HEK293 (cell line): ENCODE measurements at regions of chr22 and their contacts with region 1.

Region 1: DNA sequence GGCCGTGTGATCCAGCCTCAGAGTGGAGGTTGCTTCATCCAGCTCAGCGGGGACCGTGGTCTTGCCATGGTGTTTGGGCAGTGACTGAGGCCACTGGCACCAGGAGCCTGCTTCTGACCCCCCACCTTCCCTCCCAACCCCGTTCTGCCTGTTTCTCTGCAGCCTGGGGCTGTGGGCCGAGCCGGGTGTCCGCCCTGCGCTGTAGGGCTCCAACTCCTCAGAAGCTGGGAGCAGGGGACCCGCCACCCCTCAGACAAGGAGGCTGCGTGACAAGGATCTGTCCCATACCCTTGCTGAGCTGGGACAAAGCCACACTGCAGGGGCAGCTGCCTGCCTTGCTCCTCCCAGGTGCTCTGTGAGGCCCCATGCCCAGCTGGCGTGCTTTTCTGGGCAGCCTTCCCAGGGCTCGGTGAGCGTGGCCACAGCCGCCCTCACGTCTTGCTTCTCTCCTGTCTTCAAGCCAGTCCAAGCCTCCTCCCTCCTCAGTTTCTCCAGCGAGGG is 11.7 kb upstream of the ARFGAP3 start:
- H3K4me3 ChIP-seq: no peak overlapping the region
- H3K27ac ChIP-seq: no peak overlapping the region
- H3K4me1 ChIP-seq: no peaks in the 10 kb centered on the region
- CTCF ChIP-seq: no peak

Region 2: GRCh38 chr22:42116848-42117424 is 751.9 kb before region 1 on chr22:
- CTCF ChIA-PET with region 1: no interaction called
- POLR2A ChIA-PET with region 1: no interaction called
- H3K4me3 ChIP-seq: no peak overlapping the region
- H3K27ac ChIP-seq: no peak overlapping the region
- H3K4me1 ChIP-seq: no peaks in the 10 kb centered on the region
- CTCF ChIP-seq: no peak

Region 3: DNA sequence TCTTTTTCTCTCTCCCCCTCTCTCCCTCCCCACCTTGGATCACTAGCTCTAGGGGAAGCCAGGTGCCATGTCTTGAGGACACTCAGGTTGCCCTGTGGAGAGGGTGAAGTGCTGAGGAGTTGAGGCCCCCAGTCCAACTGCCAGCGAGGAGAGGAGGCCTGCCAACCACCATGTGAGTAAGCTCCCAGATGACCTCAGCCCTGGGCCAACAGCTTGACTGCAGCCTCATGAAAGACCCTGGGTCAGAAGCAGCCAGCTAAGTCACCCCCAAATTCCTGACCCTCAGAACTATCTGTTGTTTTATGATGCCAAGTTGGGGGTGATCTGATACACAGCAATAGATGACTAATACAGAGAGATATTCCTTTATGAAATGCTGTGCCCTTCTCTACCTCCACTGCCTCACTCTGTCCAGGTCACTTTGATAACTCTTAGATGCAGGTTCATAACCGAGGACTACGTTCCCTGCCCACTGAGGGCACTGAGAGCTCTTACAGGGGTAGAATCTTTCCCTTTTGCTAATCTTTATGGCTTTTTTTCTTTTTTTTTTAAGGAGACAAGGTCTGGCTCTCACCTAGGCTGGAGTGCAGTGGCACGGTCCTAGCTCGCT is 19.8 kb before region 1 on chr22:
- CTCF ChIA-PET with region 1: interaction called, 23 read pairs
- POLR2A ChIA-PET with region 1: no interaction called
- H3K4me3 ChIP-seq: no peak overlapping the region
- H3K27ac ChIP-seq: no peak overlapping the region
- H3K4me1 ChIP-seq: no peaks in the 10 kb centered on the region
- CTCF ChIP-seq: no peak

Region 4: DNA sequence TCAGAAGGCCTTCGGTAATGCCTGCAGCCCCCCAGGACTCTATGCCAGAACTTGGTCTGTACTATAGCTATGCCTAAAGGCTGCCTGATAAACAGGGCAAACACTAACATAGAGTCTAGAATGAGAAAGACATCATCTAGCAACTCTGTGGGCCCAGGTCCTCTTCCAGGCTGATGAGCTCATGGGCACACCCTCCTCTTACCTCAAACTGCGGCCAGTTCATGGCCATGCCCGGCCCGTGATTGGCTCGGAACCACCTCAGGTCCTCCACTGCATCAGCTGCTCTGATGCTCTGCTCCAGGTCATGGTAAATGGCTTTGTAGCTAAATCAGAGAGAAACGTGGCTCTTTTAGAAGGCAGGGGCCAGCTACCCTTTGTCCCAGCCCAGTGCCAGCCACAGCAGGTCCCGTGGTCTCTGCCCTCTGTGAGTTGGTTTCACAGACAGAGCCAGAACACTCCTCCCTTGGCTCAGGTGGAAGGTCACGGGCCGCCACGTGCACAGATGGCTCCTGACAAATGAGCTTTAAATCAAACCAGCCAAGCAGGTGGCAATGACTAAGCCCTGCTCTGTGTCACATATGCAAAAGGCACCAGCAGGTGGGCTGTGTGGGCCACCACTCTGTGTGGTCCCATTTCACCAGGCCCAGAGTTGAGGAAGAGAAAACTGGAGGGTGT is 13.3 kb after region 1 on chr22:
- CTCF ChIA-PET with region 1: interaction called, 25 read pairs
- POLR2A ChIA-PET with region 1: no interaction called
- H3K4me3 ChIP-seq: no peak overlapping the region
- H3K27ac ChIP-seq: no peak overlapping the region
- H3K4me1 ChIP-seq: no peaks in the 10 kb centered on the region
- CTCF ChIP-seq: no peak

Region 5: DNA sequence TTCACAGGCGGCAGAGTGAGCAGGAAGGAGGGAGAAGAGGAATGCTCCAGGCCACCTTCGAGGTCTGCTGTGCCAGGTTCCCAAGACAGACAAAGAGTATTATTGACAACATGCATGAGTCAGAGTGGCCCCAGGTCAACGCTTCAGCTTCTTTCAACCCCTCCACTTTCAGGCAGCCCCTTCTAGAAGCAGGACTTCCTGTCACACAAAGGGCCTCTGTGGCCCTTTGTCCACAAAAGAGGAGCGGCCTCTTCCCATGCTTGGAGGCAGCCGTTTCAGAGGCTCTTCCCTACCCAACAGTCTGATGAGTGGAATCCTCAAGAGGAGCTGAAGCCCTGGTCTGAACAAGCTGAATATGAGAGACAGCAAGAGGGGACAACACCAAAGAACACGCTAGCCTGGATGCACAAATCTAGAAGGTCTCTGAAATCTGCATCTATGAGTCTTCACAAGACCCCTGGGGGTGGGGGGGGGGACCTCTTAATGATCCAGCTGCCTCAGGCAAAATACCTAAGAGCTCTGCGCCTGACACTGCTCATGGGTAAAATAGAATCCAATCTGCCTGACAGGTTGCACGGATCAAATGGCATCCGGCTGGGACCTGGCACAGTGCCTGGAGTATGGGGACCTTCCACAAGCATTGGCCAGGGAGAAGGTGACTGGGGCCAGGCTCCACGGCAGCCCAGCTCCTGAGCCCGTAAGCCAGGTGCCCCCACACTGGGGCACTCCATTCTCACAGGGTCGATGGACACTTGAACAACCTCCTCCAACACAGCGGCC is 78.6 kb after region 1 on chr22:
- CTCF ChIA-PET with region 1: interaction called, 14 read pairs
- POLR2A ChIA-PET with region 1: no interaction called
- H3K4me3 ChIP-seq: no peak overlapping the region
- H3K27ac ChIP-seq: peak overlapping the region; percentile 19; the same call in 1 of the 2 replicates
- H3K4me1 ChIP-seq: peaks cover 35% of the 10 kb centered on the region
- CTCF ChIP-seq: no peak

Region 6: DNA sequence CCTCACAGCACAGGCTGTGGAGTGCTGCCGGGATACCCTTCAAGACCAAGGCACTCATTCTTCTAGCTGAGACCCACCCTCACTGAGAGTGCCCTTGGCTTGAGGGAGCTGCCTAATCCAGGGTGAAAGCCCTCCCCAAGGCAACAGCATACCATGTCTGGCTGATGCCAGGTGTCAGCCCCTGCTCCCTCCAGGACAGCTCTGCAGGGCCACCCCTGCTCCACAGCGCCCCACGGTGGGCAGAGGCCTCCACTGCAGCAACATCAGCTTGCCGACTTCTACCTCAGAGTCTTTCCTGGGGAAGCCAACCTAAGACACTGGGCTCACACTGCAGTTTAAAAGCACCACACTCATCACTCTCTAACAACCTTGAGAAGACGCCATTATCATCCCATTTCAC is 191.4 kb after region 1 on chr22:
- CTCF ChIA-PET with region 1: interaction called, 16 read pairs
- POLR2A ChIA-PET with region 1: no interaction called
- H3K4me3 ChIP-seq: no peak overlapping the region
- H3K27ac ChIP-seq: no peak overlapping the region
- H3K4me1 ChIP-seq: no peaks in the 10 kb centered on the region
- CTCF ChIP-seq: peak; percentile 82